ENCODE measurements at regions of chr7 and their contacts with region 1.

Region 1: DNA sequence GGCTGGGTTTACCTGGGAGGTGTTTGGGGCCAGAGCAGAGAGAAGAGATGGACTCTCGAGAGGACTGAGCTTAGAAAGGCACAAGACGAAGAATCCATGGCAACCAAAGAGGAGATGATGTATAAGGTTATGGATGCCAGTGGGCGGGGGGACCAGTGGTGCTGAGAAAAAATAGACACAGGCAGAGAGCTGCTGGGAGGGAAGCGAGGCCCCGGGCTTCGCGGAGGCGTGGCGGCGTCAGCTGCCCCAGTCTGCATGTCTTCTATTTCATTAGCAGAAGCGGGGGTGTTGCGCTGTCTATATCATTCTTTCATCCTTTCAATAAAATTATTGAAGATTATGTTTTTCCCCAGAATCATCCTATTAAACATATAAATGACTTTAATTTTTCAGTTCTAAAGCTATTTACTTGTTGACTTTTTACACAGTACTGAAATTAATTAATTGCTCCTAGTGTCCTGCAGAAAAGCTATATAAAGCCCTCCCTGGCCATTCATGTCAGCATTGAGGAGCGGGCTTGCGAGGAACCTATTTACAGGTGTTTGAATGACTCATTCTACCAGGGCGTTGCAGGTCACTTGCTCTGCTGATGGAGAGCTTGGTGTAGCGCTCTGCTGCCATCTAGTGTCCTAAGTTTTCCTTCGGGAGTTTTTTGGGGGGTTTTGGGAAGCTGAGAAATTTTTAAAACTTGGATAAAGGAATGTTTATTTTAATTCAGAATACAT is 42.9 kb upstream of the BHLHA15 start:
- DNase-seq: peak; percentile 72
- H3K4me3 Mint-ChIP-seq: no peak overlapping the region
- H3K27ac Mint-ChIP-seq: no peak overlapping the region
- H3K4me1 Mint-ChIP-seq: peaks cover 6% of the 10 kb centered on the region
- H3K27me3 Mint-ChIP-seq: no peaks in the 10 kb centered on the region

Region 2: DNA sequence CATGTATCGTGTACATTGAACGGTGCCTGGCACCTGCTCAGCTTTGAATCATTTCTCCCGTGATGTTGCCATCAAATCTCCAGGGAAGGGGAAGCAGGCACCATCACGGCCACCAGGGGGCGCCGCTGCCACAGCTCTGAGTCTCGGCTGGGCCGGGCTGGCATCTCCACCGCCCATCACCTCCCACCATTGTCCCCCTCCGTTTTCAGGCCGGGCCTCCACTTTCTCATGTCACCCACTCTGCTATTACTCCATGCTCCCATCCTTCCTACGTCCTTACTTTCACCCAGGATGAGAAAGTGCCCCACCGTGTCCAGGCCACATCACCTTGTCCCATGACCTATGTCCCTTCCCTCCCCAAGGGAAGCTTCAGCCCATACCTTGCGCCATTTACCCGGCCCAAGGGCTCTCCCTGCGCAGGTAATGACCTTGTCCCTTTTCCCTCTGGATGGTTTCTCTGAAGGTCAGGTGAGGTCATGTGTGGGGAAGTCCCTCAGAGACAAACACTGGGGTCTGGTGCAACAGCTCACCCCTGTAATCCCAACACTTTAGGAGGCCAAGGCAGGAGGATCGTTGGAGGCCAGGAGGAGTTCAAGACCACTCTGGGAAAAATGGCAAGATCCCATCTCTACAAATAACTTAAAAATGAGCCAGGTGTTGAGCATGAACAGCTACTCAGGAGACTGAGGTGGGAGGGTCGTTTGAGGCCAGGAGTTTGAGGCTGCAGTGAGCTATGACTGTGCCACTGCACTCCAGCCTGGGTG is 146.6 kb before region 1 on chr7:
- CTCF ChIA-PET with region 1: interaction called, 368 read pairs
- POLR2A ChIA-PET with region 1: no interaction called
- intact Hi-C with region 1: loop called (anchors 1 kb)
- DNase-seq: peak; percentile 88
- H3K4me3 Mint-ChIP-seq: no peak overlapping the region
- H3K27ac Mint-ChIP-seq: no peak overlapping the region
- H3K4me1 Mint-ChIP-seq: peaks cover 2% of the 10 kb centered on the region
- H3K27me3 Mint-ChIP-seq: peaks cover 2% of the 10 kb centered on the region

Region 3: DNA sequence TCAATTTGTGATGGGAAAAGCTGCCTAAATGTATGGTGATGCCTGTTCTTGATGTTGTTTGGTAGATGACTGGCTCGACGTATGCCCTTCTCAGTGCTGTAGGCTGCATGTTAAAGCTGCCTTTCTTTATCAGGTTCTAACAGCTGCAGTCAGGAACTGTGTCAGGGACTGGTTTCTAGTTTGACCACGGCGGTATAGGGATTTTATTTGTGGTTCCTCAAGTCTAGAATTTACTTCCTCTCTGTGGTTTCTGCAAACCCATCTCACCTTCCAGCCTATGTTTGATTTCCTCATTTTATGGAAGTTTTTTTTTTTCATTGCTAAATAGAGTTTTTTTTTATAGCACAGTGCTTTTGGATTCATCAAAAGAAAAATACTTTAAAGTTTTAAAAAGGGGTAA is 35.2 kb before region 1 on chr7:
- CTCF ChIA-PET with region 1: interaction called, 17 read pairs
- POLR2A ChIA-PET with region 1: no interaction called
- intact Hi-C with region 1: no loop called
- DNase-seq: peak; percentile 28
- H3K4me3 Mint-ChIP-seq: no peak overlapping the region
- H3K27ac Mint-ChIP-seq: peak overlapping the region; percentile 43
- H3K4me1 Mint-ChIP-seq: peaks cover 44% of the 10 kb centered on the region
- H3K27me3 Mint-ChIP-seq: no peaks in the 10 kb centered on the region

Region 4: GRCh38 chr7:98178347-98178746 is 10.0 kb after region 1 on chr7:
- CTCF ChIA-PET with region 1: interaction called, 22 read pairs
- POLR2A ChIA-PET with region 1: no interaction called
- intact Hi-C with region 1: no loop called
- DNase-seq: no peak
- H3K4me3 Mint-ChIP-seq: no peak overlapping the region
- H3K27ac Mint-ChIP-seq: no peak overlapping the region
- H3K4me1 Mint-ChIP-seq: no peaks in the 10 kb centered on the region
- H3K27me3 Mint-ChIP-seq: no peaks in the 10 kb centered on the region

Region 5: GRCh38 chr7:98186452-98187137 is 18.3 kb after region 1 on chr7:
- CTCF ChIA-PET with region 1: interaction called, 11 read pairs
- POLR2A ChIA-PET with region 1: no interaction called
- intact Hi-C with region 1: no loop called
- DNase-seq: no peak
- H3K4me3 Mint-ChIP-seq: no peak overlapping the region
- H3K27ac Mint-ChIP-seq: no peak overlapping the region
- H3K4me1 Mint-ChIP-seq: no peaks in the 10 kb centered on the region
- H3K27me3 Mint-ChIP-seq: no peaks in the 10 kb centered on the region

Region 6: DNA sequence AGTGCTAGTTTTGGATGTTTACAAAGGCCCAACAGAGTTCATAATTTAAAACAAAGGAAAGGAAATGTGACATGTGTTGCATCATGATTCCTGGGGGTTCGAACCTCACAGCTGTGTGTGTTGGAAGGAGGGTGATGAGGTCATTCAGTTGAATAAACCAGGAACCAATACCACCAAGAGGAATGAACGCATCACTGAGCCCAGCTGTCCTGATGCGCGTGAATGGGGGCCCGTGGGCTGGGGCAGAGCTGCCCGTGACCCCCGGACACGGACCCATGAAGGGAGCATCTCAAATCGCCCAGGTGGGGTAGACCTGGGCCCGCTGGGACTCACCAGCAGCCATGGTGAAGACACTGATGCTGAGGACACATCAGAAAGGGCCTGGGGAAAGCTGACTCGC is 146.1 kb after region 1 on chr7:
- CTCF ChIA-PET with region 1: no interaction called
- POLR2A ChIA-PET with region 1: no interaction called
- intact Hi-C with region 1: no loop called
- DNase-seq: no peak
- H3K4me3 Mint-ChIP-seq: no peak overlapping the region
- H3K27ac Mint-ChIP-seq: no peak overlapping the region
- H3K4me1 Mint-ChIP-seq: no peaks in the 10 kb centered on the region
- H3K27me3 Mint-ChIP-seq: no peaks in the 10 kb centered on the region

Region 7: GRCh38 chr7:98617051-98617959 is 449.0 kb after region 1 on chr7 and contains the start of gene NPTX2:
- CTCF ChIA-PET with region 1: no interaction called
- POLR2A ChIA-PET with region 1: no interaction called
- intact Hi-C with region 1: no loop called
- DNase-seq: peak; percentile 19
- H3K4me3 Mint-ChIP-seq: no peak within 1 kb of the TSS
- H3K27ac Mint-ChIP-seq: no peak within 1 kb of the TSS
- H3K4me1 Mint-ChIP-seq: peaks cover 2% of the 10 kb centered on the region
- H3K27me3 Mint-ChIP-seq: peaks cover 53% of the 10 kb centered on the region
- total RNA-seq, gene NPTX2: not detected